Esophagus squamous epithelium (tissue), 5 donors: ENCODE measurements at regions of chr14 and their contacts with region 1.

Region 1: DNA sequence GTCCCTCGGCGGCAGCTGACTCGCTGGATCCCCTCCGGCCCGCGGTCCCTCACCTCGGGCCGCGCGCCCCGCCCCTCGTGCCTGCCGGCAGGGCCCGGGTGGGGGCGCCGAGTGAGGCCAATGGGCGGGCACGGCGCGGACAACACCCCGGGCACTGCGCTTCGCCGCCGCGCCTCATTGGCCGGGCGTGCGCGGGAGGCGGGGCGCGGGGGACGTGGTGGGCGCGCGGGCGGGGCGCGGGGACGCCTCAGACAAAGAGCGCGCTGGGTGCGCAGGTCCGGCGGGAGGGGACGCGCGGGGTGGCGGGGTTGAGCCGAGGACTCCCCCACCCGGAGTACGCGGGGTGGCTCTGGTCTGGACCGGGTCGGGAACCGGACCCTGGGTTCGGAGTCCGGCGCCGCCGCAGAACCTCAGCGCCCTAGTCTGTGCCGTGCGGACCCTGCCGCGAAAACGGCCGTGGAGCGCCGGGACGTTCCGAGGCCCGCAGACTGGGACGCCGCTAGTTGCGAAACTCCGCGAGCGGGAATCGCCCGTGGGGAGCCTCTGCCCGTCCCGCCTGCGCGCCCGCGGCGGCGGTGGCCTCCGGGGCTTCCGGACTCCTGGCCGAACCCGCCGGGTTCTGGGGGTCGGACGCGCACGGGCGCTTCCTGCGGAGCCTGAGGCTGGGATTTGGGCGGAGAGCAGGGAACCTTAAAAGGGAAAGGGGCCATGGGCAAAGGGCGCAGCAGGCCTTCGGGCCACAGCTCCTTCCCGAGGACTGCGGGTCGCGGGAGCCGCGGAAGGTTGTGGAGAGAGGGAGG is at the start of gene SLC25A29:
- DNase-seq: peak; percentile 36
- H3K4me3 ChIP-seq: peak within 1 kb of the TSS; percentile 79 to 99 (median 90)
- H3K27ac ChIP-seq: peak within 1 kb of the TSS; percentile 86 to 96 (median 92)
- H3K4me1 ChIP-seq: peaks cover 27 to 78% (median 43%) of the 10 kb centered on the region in 3 donors
- H3K27me3 ChIP-seq: no peaks in the 10 kb centered on the region
- CTCF ChIP-seq: no peak
- POLR2A ChIP-seq: peak in 2 of 4 donors; percentile 86 to 88
- total RNA-seq, gene SLC25A29: 23.3 to 64.3 (median 55.6) TPM

Region 2: GRCh38 chr14:100222224-100223093 is 84.2 kb before region 1 on chr14:
- intact Hi-C with region 1: no loop called
- DNase-seq: no peak
- H3K4me3 ChIP-seq: peak overlapping the region; percentile 26 to 65 (median 48)
- H3K27ac ChIP-seq: peak overlapping the region; percentile 57 to 81 (median 66)
- H3K4me1 ChIP-seq: peaks cover 4 to 39% (median 9%) of the 10 kb centered on the region in 3 donors
- H3K27me3 ChIP-seq: no peaks in the 10 kb centered on the region
- CTCF ChIP-seq: no peak
- POLR2A ChIP-seq: no peak

Region 3: GRCh38 chr14:100281286-100282082 is 25.1 kb before region 1 on chr14:
- intact Hi-C with region 1: loop called (anchors 2 kb)
- DNase-seq: no peak
- H3K4me3 ChIP-seq: no peak overlapping the region
- H3K27ac ChIP-seq: peak overlapping the region in 3 of 4 donors; percentile 10 to 95 (median 64)
- H3K4me1 ChIP-seq: peaks cover 22 to 82% (median 48%) of the 10 kb centered on the region in 3 donors
- H3K27me3 ChIP-seq: no peaks in the 10 kb centered on the region
- CTCF ChIP-seq: no peak
- POLR2A ChIP-seq: no peak

Region 4: DNA sequence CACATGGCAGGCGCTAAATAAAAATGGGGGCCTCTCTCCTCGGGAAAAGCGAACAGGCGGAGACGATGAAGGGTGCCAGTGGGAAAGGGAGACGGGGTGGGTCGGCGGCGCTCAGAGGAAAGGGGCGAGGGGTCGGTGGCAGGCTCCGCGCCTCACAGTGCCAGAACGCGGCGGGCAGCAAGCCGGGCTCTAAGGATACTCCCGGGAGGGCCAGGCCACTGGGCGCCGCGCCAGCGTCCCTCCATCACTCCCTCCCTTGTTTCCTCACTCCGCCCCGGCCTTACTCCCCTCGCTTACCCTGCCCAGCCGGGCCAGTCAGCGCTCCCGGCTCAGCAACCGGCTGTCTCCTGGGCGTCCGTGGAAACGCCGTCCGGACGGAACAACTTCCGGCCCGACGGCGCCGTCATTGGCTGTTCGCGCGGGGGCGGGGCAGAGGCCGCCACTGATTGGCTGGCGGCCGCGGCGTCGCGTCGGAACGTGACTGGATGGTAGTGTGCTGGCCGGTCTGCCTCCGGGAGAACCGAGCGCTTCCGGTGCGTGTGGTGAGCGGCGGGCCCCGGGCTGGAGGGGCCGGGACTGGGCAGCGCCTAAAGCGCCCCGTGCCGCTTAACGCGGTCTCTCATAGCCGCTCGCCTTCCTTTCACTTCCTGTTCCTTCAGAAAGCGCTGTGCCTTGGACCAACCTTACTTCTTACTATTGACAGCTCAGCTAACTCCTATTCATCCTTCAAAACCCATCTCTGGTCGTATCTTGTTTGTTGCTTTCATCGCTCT is 69.5 kb after region 1 on chr14:
- intact Hi-C with region 1: loop called (anchors 10 kb)
- DNase-seq: peak; percentile 64
- H3K4me3 ChIP-seq: peak within 1 kb of the TSS; percentile 53 to 79 (median 74)
- H3K27ac ChIP-seq: peak within 1 kb of the TSS; percentile 87 to 95 (median 90)
- H3K4me1 ChIP-seq: peaks cover 12 to 64% (median 30%) of the 10 kb centered on the region in 3 donors
- H3K27me3 ChIP-seq: no peaks in the 10 kb centered on the region
- CTCF ChIP-seq: peak in 2 of 6 experiments; percentile 7 to 45
- POLR2A ChIP-seq: peak in 3 of 4 donors; percentile 25 to 85 (median 51)